Sigmoid colon (tissue), 7 donors: ENCODE measurements at regions of chr18 and their contacts with region 1.

Region 1: GRCh38 chr18:61963705-61964104 is 70.9 kb upstream of the RNF152 start:
- DNase-seq: no peak
- H3K4me3 ChIP-seq: no peak overlapping the region
- H3K27ac ChIP-seq: no peak overlapping the region
- H3K4me1 ChIP-seq: peaks cover 0 to 18% (median 14%) of the 10 kb centered on the region in 4 donors
- H3K27me3 ChIP-seq: no peaks in the 10 kb centered on the region
- CTCF ChIP-seq: no peak
- EP300 ChIP-seq: no peak
- POLR2A ChIP-seq: no peak

Region 2: GRCh38 chr18:61882296-61883004 is 81.3 kb before region 1 on chr18:
- intact Hi-C with region 1: no loop called
- DNase-seq: no peak
- H3K4me3 ChIP-seq: no peak overlapping the region
- H3K27ac ChIP-seq: no peak overlapping the region
- H3K4me1 ChIP-seq: peaks cover 0 to 4% (median 0%) of the 10 kb centered on the region in 4 donors
- H3K27me3 ChIP-seq: no peaks in the 10 kb centered on the region
- CTCF ChIP-seq: no peak
- EP300 ChIP-seq: no peak
- POLR2A ChIP-seq: no peak

Region 3: DNA sequence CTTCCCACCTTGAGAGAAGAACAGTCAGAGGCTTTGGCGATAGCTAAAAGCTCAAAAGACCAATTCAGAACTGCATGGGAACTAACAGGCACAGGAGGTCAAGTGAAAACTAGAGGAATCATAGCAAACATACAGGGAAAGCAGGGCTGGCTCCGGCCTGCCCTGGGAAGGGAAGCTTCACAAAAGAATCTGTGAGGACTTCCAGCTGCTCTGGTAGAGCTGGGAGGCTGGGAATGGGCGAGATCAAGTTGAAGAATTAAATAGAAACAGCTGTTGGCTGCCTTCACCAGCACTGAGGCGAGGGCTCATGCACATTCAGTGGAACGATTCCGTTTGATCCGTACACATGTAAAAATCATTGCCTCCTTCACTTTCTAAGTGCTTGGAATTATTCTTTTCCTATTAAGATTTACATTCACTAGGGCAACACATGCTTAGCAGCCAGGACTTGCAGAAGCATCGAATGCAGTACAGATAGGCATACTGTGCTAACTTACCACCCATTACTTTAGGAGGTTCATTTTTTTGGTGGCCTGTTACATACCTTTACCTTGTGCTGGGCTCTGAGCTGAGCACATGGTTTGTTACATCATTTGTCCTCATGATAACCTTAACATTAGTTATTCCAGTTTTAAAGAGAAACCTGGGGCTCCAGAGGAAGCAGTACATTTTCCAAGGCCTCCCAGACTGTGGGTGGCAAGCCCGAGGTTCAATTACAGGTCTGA is 54.5 kb after region 1 on chr18:
- intact Hi-C with region 1: loop called (anchors 5 kb)
- DNase-seq: peak; percentile 82
- H3K4me3 ChIP-seq: no peak overlapping the region
- H3K27ac ChIP-seq: peak overlapping the region; percentile 24 to 63 (median 56)
- H3K4me1 ChIP-seq: peaks cover 0 to 22% (median 17%) of the 10 kb centered on the region in 4 donors
- H3K27me3 ChIP-seq: no peaks in the 10 kb centered on the region
- CTCF ChIP-seq: no peak
- EP300 ChIP-seq: no peak
- POLR2A ChIP-seq: no peak

Region 4: DNA sequence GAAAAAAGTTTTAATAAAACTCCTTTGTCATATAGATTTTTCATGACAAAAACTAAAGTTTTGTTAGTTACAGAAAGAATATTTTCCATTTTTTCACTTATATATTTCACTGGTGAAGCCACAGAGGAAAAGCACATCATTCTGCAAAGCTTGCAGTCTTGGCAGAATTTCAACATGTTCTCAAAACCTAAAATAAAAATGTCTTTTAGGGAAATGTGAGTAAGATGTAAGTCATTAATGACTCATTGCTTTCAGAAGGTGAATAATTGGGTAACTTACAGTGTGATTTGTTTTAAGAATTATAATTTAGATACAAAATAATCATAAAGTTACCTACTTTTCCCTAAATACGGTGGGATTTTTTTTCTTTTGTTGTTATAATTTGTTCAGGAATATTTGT is 318.0 kb after region 1 on chr18:
- intact Hi-C with region 1: no loop called
- DNase-seq: no peak
- H3K4me3 ChIP-seq: no peak overlapping the region
- H3K27ac ChIP-seq: peak overlapping the region in 1 of 4 donors; percentile 27
- H3K4me1 ChIP-seq: peaks cover 0 to 16% (median 7%) of the 10 kb centered on the region in 4 donors
- H3K27me3 ChIP-seq: no peaks in the 10 kb centered on the region
- CTCF ChIP-seq: no peak
- EP300 ChIP-seq: no peak
- POLR2A ChIP-seq: no peak